Activated CD8-positive, alpha-beta T cell treated with anti-CD3 and anti-CD28 coated beads, Interleukin-2, amount 10 ng/mL, durations not matched to agents 7 days and 5 days (primary cell): ENCODE measurements at regions of chr16 and their contacts with region 1.

Region 1: GRCh38 chr16:66728117-66728787 is 23.2 kb downstream of the DYNC1LI2 start:
- DNase-seq: peak; percentile 44
- ATAC-seq: peak; percentile 83
- H3K4me3 Mint-ChIP-seq: no peak overlapping the region
- H3K27ac Mint-ChIP-seq: peak overlapping the region; percentile 33
- H3K4me1 Mint-ChIP-seq: peaks cover 24% of the 10 kb centered on the region
- H3K27me3 Mint-ChIP-seq: no peaks in the 10 kb centered on the region

Region 2: DNA sequence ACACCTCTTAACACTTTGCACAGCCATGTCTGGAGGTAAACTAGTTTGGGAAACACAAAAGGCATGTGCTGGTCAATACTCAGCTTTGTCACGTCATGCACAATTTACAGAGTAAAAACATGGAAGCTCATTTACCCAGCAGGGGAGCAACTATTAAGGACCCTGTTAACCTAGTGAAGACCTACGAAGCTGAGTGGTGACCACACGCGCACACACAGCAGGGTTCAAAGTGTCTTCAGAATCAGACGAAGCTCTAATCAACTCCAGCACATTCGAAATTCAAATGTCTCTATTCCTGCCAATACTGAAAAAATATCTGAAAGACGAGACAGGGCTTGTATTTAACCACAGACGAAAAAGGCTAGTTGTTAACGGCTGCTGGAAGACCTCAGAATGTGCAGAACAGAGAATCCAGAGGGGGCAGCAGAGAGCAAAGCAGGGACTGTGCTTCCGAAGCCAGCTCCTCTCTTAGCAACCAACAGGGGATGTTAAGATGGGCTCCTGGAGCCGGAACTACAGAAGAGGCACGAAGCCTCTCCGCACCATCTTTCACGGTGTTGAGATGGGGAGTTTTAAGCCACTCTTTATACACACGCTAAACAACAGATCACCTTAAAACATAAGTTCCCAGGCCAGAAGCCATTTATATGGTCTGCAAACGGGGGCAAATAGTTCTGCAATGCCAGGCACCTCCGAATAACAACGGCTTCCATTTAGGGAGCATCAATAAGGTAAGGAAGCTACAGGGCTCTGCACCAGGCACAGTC is 77.4 kb before region 1 on chr16:
- CTCF ChIA-PET with region 1: interaction called, 16 read pairs
- POLR2A ChIA-PET with region 1: no interaction called
- DNase-seq: peak; percentile 91
- ATAC-seq: peak; percentile 99
- H3K4me3 Mint-ChIP-seq: peak overlapping the region; percentile 10
- H3K27ac Mint-ChIP-seq: no peak overlapping the region
- H3K4me1 Mint-ChIP-seq: peaks cover 16% of the 10 kb centered on the region
- H3K27me3 Mint-ChIP-seq: peaks cover 7% of the 10 kb centered on the region

Region 3: GRCh38 chr16:66696669-66697630 is 31.3 kb before region 1 on chr16 and contains the start of gene CMTM4:
- CTCF ChIA-PET with region 1: interaction called, 12 read pairs
- POLR2A ChIA-PET with region 1: no interaction called
- DNase-seq: peak; percentile 72
- ATAC-seq: peak; percentile 94
- H3K4me3 Mint-ChIP-seq: peak within 1 kb of the TSS; percentile 75
- H3K27ac Mint-ChIP-seq: peak within 1 kb of the TSS; percentile 20
- H3K4me1 Mint-ChIP-seq: peaks cover 23% of the 10 kb centered on the region
- H3K27me3 Mint-ChIP-seq: peaks cover 41% of the 10 kb centered on the region
- total RNA-seq, gene CMTM4: 1.2 TPM

Region 4: GRCh38 chr16:66713076-66713475 is 15.2 kb before region 1 on chr16:
- CTCF ChIA-PET with region 1: interaction called, 11 read pairs
- POLR2A ChIA-PET with region 1: no interaction called
- DNase-seq: no peak
- ATAC-seq: no peak
- H3K4me3 Mint-ChIP-seq: no peak overlapping the region
- H3K27ac Mint-ChIP-seq: no peak overlapping the region
- H3K4me1 Mint-ChIP-seq: no peaks in the 10 kb centered on the region
- H3K27me3 Mint-ChIP-seq: peaks cover 11% of the 10 kb centered on the region

Region 5: GRCh38 chr16:66740010-66740409 is 11.8 kb after region 1 on chr16:
- CTCF ChIA-PET with region 1: interaction called, 128 read pairs
- POLR2A ChIA-PET with region 1: interaction called, 3 read pairs
- DNase-seq: peak; percentile 56
- ATAC-seq: peak; percentile 73
- H3K4me3 Mint-ChIP-seq: no peak overlapping the region
- H3K27ac Mint-ChIP-seq: peak overlapping the region; percentile 9
- H3K4me1 Mint-ChIP-seq: peaks cover 27% of the 10 kb centered on the region
- H3K27me3 Mint-ChIP-seq: no peaks in the 10 kb centered on the region

Region 6: DNA sequence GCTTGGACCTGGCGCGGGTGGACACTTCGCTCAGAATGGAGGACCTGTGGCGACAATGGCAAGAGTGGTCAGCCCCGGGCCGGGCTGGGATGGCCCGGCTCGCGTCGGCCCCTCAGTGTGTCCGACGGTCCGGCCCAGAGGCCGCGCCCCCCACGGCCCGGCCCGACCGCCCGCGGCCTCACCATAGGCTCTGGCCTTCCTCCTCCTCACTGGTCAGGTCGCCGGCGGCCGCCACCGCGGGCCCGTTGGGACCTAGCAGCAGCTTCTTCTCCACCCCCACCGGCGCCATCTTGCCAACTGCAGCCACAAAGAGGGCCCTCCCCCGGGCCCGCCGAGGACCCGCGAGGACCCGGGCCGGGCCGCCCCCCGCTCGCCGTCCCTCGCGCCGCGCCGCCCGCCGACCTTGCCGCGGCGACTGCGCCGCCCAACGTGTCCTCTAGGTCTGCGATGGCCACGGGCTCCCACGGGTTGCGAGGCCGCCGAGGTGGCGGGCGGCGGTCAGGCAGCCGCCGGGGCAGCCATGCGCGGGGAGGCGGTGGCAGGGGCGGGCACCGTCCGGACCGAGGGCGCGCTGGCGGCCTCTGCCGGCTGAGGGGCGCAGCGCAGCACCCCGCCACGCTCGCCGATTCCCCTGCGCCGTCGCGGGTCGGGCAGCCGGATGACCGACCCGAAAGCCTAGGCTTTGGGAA is 23.2 kb after region 1 on chr16 and contains the start of gene DYNC1LI2:
- CTCF ChIA-PET with region 1: interaction called, 36 read pairs
- POLR2A ChIA-PET with region 1: interaction called, 4 read pairs
- DNase-seq: peak; percentile 84
- ATAC-seq: peak; percentile 84
- H3K4me3 Mint-ChIP-seq: peak within 1 kb of the TSS; percentile 80
- H3K27ac Mint-ChIP-seq: peak within 1 kb of the TSS; percentile 90
- H3K4me1 Mint-ChIP-seq: peaks cover 44% of the 10 kb centered on the region
- H3K27me3 Mint-ChIP-seq: peaks cover 17% of the 10 kb centered on the region
- total RNA-seq, gene DYNC1LI2: 56.5 to 63.1 TPM

Region 7: GRCh38 chr16:66801320-66802105 is 73.3 kb after region 1 on chr16 and contains the start of gene TERB1:
- CTCF ChIA-PET with region 1: no interaction called
- POLR2A ChIA-PET with region 1: no interaction called
- DNase-seq: no peak
- ATAC-seq: no peak
- H3K4me3 Mint-ChIP-seq: no peak within 1 kb of the TSS
- H3K27ac Mint-ChIP-seq: no peak within 1 kb of the TSS
- H3K4me1 Mint-ChIP-seq: no peaks in the 10 kb centered on the region
- H3K27me3 Mint-ChIP-seq: no peaks in the 10 kb centered on the region
- total RNA-seq, gene TERB1: not detected

Region 8: GRCh38 chr16:66924527-66925321 is 196.5 kb after region 1 on chr16:
- CTCF ChIA-PET with region 1: interaction called, 11 read pairs
- POLR2A ChIA-PET with region 1: no interaction called
- DNase-seq: peak; percentile 52
- ATAC-seq: peak; percentile 75
- H3K4me3 Mint-ChIP-seq: peak overlapping the region; percentile 53
- H3K27ac Mint-ChIP-seq: no peak overlapping the region
- H3K4me1 Mint-ChIP-seq: peaks cover 22% of the 10 kb centered on the region
- H3K27me3 Mint-ChIP-seq: peaks cover 34% of the 10 kb centered on the region